Panc1 (cell line): ENCODE measurements at regions of chr11 and their contacts with region 1.

Region 1: DNA sequence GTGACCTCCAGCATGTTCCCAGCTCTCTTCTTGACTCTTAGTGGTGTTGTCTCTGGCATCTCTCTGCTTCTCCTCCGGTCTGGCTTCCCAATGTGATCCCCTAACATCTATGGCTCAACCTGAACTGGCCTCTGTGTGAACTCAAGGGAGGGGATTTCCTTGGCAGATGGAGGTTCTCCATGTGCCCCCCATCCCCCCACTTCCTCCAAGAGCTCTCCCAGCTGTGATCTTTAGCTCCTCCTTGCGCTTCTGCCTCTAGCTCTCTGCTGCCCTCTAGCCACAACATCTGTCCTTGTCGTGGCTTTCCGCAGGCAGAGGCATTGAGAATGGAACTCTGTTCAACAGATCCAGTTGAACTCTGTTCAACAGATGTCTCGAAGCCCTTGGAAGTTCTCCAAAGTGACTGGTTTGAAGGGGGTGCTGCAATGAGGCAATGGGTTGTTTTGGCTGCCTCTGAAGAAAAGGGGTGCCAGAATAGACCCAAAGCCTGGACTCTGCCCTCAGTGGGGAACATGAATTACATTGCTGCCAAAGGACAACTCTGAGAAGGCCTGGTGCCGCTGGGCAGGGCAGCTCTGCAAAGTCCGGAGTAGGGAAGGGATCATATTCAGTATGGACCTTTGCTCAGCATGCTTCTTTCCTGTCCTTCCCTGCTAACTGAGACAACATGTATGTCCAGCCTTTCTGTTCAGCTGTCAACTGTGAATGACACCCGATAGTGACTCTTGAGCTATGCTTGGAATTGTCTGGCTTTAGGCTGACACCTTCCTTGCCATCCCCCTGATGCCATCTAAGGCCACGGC is 61.9 kb downstream of the ADM start:
- DNase-seq: peak; percentile 85
- ATAC-seq: peak; percentile 95
- H3K4me3 ChIP-seq: peak overlapping the region in 1 of 2 experiments; percentile 12; a peak in 1 of 4 replicates
- H3K27ac ChIP-seq: peak overlapping the region; percentile 57; the same call in 1 of the 2 replicates
- H3K4me1 ChIP-seq: peaks cover 9% of the 10 kb centered on the region
- H3K27me3 ChIP-seq: no peaks in the 10 kb centered on the region
- CTCF ChIP-seq: peak; percentile 98

Region 2: DNA sequence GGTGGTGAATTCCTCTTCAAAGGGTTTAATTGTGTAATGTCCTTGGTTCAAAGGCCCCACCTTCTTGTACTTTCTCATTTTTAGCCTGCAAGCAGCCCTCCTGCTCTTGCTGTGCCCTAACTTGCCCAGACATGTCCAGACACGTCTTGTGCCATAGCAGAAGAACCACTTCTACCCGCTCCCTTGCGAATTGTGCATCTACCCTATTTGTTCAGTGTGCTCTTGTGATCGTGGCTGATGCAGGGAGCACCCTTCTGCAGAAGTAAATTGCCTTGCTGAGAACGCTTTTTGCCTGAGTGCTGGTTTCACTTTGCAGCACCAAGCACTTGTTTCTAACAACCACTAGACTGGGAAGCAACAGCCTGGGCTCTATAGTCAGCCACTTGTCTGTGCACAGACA is 322.2 kb before region 1 on chr11:
- CTCF ChIA-PET with region 1: interaction called, 3 read pairs
- POLR2A ChIA-PET with region 1: interaction called, 10 read pairs
- in situ Hi-C with region 1: no loop called
- intact Hi-C with region 1: no loop called
- DNase-seq: no peak
- ATAC-seq: no peak
- H3K4me3 ChIP-seq: no peak overlapping the region
- H3K27ac ChIP-seq: no peak overlapping the region; the same call in 1 of the 2 replicates
- H3K4me1 ChIP-seq: no peaks in the 10 kb centered on the region
- H3K27me3 ChIP-seq: no peaks in the 10 kb centered on the region
- CTCF ChIP-seq: no peak

Region 3: GRCh38 chr11:10405855-10406592 is 39.3 kb after region 1 on chr11:
- CTCF ChIA-PET with region 1: no interaction called
- POLR2A ChIA-PET with region 1: no interaction called
- in situ Hi-C with region 1: no loop called
- intact Hi-C with region 1: no loop called
- DNase-seq: peak; percentile 84
- ATAC-seq: peak; percentile 91
- H3K4me3 ChIP-seq: no peak overlapping the region
- H3K27ac ChIP-seq: peak overlapping the region; percentile 4; the same call in 1 of the 2 replicates
- H3K4me1 ChIP-seq: peaks cover 18% of the 10 kb centered on the region
- H3K27me3 ChIP-seq: no peaks in the 10 kb centered on the region
- CTCF ChIP-seq: peak; percentile 96

Region 4: GRCh38 chr11:10519630-10520029 is 152.9 kb after region 1 on chr11:
- CTCF ChIA-PET with region 1: interaction called, 14 read pairs
- POLR2A ChIA-PET with region 1: no interaction called
- in situ Hi-C with region 1: no loop called
- intact Hi-C with region 1: no loop called
- DNase-seq: no peak
- ATAC-seq: no peak
- H3K4me3 ChIP-seq: no peak overlapping the region
- H3K27ac ChIP-seq: no peak overlapping the region
- H3K4me1 ChIP-seq: no peaks in the 10 kb centered on the region
- H3K27me3 ChIP-seq: no peaks in the 10 kb centered on the region
- CTCF ChIP-seq: no peak